B cell (primary cell): ENCODE measurements at regions of chr16 and their contacts with region 1.

Region 1: GRCh38 chr16:23803591-23804123 is 32.1 kb upstream of the PRKCB start:
- DNase-seq: peak; percentile 80
- ATAC-seq: peak; percentile 78
- H3K4me3 ChIP-seq: peak overlapping the region in 2 of 5 experiments; percentile 11 to 37
- H3K4me3 Mint-ChIP-seq: peak overlapping the region; percentile 52
- H3K27ac ChIP-seq: no peak overlapping the region
- H3K27ac Mint-ChIP-seq: peak overlapping the region; percentile 12
- H3K4me1 ChIP-seq: peaks cover 25 to 43% of the 10 kb centered on the region in 2 donors
- H3K4me1 Mint-ChIP-seq: peaks cover 35% of the 10 kb centered on the region
- H3K27me3 ChIP-seq: no peaks in the 10 kb centered on the region
- H3K27me3 Mint-ChIP-seq: no peaks in the 10 kb centered on the region
- CTCF ChIP-seq: peak; percentile 76

Region 2: GRCh38 chr16:23615805-23616204 is 187.9 kb before region 1 on chr16:
- CTCF ChIA-PET with region 1: no interaction called
- POLR2A ChIA-PET with region 1: no interaction called
- intact Hi-C with region 1: no loop called
- DNase-seq: no peak
- ATAC-seq: no peak
- H3K4me3 ChIP-seq: no peak overlapping the region
- H3K4me3 Mint-ChIP-seq: no peak overlapping the region
- H3K27ac ChIP-seq: no peak overlapping the region
- H3K27ac Mint-ChIP-seq: no peak overlapping the region
- H3K4me1 ChIP-seq: no peaks in the 10 kb centered on the region
- H3K4me1 Mint-ChIP-seq: no peaks in the 10 kb centered on the region
- H3K27me3 ChIP-seq: no peaks in the 10 kb centered on the region
- H3K27me3 Mint-ChIP-seq: no peaks in the 10 kb centered on the region
- CTCF ChIP-seq: no peak

Region 3: DNA sequence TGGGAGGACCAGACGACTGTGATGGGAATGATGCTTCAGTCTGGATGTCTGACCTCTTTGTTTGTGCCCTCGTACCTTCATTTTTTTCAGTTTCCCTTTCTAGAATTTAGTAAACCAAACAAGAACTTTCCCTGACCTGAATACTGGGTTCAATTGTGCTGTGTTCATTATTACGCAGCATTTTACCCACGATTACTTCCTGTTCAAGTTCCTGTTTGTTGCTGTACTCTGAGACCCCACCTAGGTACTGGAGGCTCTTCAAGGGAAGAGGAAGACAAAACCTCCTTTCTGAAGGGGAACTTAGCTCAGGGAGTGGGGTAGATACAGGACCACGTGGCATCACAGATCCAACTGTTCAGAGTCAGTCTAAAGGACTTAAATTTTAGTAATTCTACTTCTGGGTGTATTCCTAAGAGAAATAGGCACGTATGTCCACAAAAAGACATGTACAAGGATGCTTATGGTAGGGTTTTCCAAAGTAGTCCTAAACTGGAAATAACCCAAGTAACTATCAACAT is 22.9 kb after region 1 on chr16:
- CTCF ChIA-PET with region 1: interaction called, 17 read pairs
- POLR2A ChIA-PET with region 1: interaction called, 3 read pairs
- intact Hi-C with region 1: loop called (anchors 2 kb)
- DNase-seq: peak; percentile 84
- ATAC-seq: peak; percentile 91
- H3K4me3 ChIP-seq: peak overlapping the region in 3 of 5 experiments; percentile 10 to 34 (median 16)
- H3K4me3 Mint-ChIP-seq: peak overlapping the region; percentile 77
- H3K27ac ChIP-seq: peak overlapping the region; percentile 38 to 62
- H3K27ac Mint-ChIP-seq: peak overlapping the region; percentile 84
- H3K4me1 ChIP-seq: peaks cover 25 to 26% of the 10 kb centered on the region in 2 donors
- H3K4me1 Mint-ChIP-seq: peaks cover 28% of the 10 kb centered on the region
- H3K27me3 ChIP-seq: no peaks in the 10 kb centered on the region
- H3K27me3 Mint-ChIP-seq: no peaks in the 10 kb centered on the region
- CTCF ChIP-seq: no peak

Region 4: DNA sequence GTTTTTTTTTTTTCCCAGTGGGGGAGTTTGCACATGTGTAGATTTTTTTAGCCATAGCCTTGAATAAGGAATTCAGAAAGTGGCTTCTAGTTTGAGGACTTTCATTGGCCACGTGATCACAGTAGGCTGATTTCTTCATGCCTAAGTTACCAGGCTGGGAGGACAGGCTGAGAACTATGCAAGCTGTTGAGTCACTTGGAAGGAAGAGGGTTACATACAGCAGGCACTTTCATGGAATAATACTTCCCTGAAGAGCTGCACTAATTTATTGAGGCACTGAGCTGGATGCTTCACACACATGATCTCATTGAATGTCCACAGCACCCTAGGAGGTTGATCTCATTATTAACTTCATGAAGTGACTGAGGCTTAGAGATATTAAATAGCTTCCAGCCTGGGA is 54.9 kb after region 1 on chr16:
- CTCF ChIA-PET with region 1: interaction called, 39 read pairs
- POLR2A ChIA-PET with region 1: interaction called, 4 read pairs
- intact Hi-C with region 1: no loop called
- DNase-seq: no peak
- ATAC-seq: no peak
- H3K4me3 ChIP-seq: no peak overlapping the region
- H3K4me3 Mint-ChIP-seq: peak overlapping the region; percentile 54
- H3K27ac ChIP-seq: peak overlapping the region; percentile 26 to 86
- H3K27ac Mint-ChIP-seq: peak overlapping the region; percentile 80
- H3K4me1 ChIP-seq: peaks cover 96 to 97% of the 10 kb centered on the region in 2 donors
- H3K4me1 Mint-ChIP-seq: peaks cover 94% of the 10 kb centered on the region
- H3K27me3 ChIP-seq: no peaks in the 10 kb centered on the region
- H3K27me3 Mint-ChIP-seq: no peaks in the 10 kb centered on the region
- CTCF ChIP-seq: no peak

Region 5: DNA sequence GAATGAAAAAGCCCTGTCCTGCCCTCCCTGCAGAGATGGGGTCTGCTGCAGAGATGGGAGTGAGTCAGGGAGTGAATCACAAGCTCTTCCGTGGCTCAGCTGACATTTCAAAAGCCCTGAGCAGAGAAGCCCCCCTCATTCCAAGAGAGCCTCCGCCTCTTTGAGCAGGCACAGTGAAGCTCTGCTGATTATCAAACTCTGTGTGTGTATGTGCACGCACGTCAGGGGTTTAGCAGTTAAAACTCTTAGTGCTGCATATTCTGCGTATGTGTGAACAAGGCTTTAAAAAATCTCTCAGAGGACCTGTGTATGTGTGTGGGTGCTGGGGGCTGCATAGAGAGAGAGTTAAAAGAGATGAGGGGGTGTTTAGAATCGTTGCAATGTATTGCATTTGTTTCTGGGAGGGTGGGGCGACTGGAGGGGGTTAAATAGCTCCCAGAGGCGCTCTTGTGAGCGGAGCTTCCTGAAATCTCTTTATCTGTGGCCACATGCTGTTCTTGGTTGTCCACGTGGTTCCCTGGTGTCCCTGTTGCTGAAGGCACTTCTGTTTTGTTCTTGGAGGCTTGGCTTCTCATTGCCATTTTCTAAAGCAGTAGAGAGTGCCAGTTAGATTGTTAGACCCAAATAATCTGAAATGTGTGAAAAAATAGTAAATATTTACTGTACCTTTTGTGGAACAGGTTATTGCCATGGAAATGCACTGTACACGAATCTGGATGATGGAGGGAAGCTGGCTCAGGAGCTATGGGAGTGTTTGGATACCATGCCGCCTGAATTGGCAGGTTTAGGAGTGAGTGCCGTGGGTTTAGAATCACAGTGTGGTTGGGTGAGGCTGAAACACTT is 148.7 kb after region 1 on chr16:
- CTCF ChIA-PET with region 1: interaction called, 13 read pairs
- POLR2A ChIA-PET with region 1: no interaction called
- intact Hi-C with region 1: no loop called
- DNase-seq: peak; percentile 38
- ATAC-seq: peak; percentile 29
- H3K4me3 ChIP-seq: peak overlapping the region in 1 of 5 experiments; percentile 15
- H3K4me3 Mint-ChIP-seq: peak overlapping the region; percentile 75
- H3K27ac ChIP-seq: peak overlapping the region; percentile 28 to 88
- H3K27ac Mint-ChIP-seq: peak overlapping the region; percentile 92
- H3K4me1 ChIP-seq: peaks cover 95 to 96% of the 10 kb centered on the region in 2 donors
- H3K4me1 Mint-ChIP-seq: peaks cover 93% of the 10 kb centered on the region
- H3K27me3 ChIP-seq: no peaks in the 10 kb centered on the region
- H3K27me3 Mint-ChIP-seq: no peaks in the 10 kb centered on the region
- CTCF ChIP-seq: no peak

Region 6: GRCh38 chr16:24010440-24011089 is 206.9 kb after region 1 on chr16:
- CTCF ChIA-PET with region 1: interaction called, 493 read pairs
- POLR2A ChIA-PET with region 1: interaction called, 5 read pairs
- intact Hi-C with region 1: loop called (anchors 1 kb)
- DNase-seq: peak; percentile 91
- ATAC-seq: peak; percentile 26
- H3K4me3 ChIP-seq: peak overlapping the region in 1 of 5 experiments; percentile 30
- H3K4me3 Mint-ChIP-seq: peak overlapping the region; percentile 80
- H3K27ac ChIP-seq: peak overlapping the region; percentile 5 to 17
- H3K27ac Mint-ChIP-seq: peak overlapping the region; percentile 90
- H3K4me1 ChIP-seq: peaks cover 95 to 100% of the 10 kb centered on the region in 2 donors
- H3K4me1 Mint-ChIP-seq: peaks cover 97% of the 10 kb centered on the region
- H3K27me3 ChIP-seq: no peaks in the 10 kb centered on the region
- H3K27me3 Mint-ChIP-seq: no peaks in the 10 kb centered on the region
- CTCF ChIP-seq: peak; percentile 91

Region 7: GRCh38 chr16:24253192-24253591 is 449.5 kb after region 1 on chr16:
- CTCF ChIA-PET with region 1: interaction called, 14 read pairs
- POLR2A ChIA-PET with region 1: no interaction called
- intact Hi-C with region 1: loop called (anchors 5 kb)
- DNase-seq: peak; percentile 71
- ATAC-seq: peak; percentile 66
- H3K4me3 ChIP-seq: no peak overlapping the region
- H3K4me3 Mint-ChIP-seq: no peak overlapping the region
- H3K27ac ChIP-seq: no peak overlapping the region
- H3K27ac Mint-ChIP-seq: no peak overlapping the region
- H3K4me1 ChIP-seq: no peaks in the 10 kb centered on the region
- H3K4me1 Mint-ChIP-seq: peaks cover 6% of the 10 kb centered on the region
- H3K27me3 ChIP-seq: peaks cover 0 to 44% (median 39%) of the 10 kb centered on the region in 4 experiments
- H3K27me3 Mint-ChIP-seq: peaks cover 51% of the 10 kb centered on the region
- CTCF ChIP-seq: peak; percentile 85